Activated CD4-positive, alpha-beta T cell treated with anti-CD3 and anti-CD28 coated beads for 36 hours (primary cell): ENCODE measurements at regions of chr5 and their contacts with region 1.

Region 1: DNA sequence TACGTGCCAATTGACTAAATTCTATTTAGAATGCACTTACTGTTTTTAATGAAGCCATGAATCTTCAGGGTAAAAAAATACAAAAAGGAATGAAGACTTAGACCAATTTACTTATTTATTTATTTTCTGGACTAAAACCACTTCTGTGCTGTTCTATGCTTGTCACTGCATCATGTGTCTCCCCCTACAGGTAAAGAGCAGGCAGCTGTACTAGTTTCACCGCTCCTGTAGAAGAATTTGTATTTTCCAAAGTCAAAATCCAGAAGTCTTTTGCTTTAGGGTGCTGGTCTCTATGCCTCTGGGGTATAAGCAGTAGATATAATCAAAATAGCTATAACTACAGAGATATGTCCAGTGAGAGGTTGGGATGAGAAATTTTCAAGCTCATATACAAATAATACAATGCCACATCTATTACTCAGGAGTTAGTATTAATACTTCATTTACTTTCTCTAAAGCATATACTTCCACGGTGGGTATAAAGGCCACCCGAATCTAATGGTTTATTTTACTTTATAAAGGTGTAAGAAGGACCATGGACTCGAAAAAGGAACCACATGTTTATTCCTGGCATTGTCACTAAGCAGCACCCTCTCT is 591.5 kb downstream of the RAB3C start:
- DNase-seq: peak; percentile 47
- ATAC-seq: peak; percentile 72
- H3K4me3 Mint-ChIP-seq: no peak overlapping the region
- H3K27ac Mint-ChIP-seq: no peak overlapping the region
- H3K4me1 Mint-ChIP-seq: peaks cover 16% of the 10 kb centered on the region
- H3K27me3 Mint-ChIP-seq: no peaks in the 10 kb centered on the region

Region 2: GRCh38 chr5:58259685-58260152 is 914.6 kb before region 1 on chr5:
- CTCF ChIA-PET with region 1: no interaction called
- POLR2A ChIA-PET with region 1: no interaction called
- intact Hi-C with region 1: no loop called
- DNase-seq: no peak
- ATAC-seq: no peak
- H3K4me3 Mint-ChIP-seq: no peak overlapping the region
- H3K27ac Mint-ChIP-seq: no peak overlapping the region
- H3K4me1 Mint-ChIP-seq: no peaks in the 10 kb centered on the region
- H3K27me3 Mint-ChIP-seq: peaks cover 7% of the 10 kb centered on the region

Region 3: DNA sequence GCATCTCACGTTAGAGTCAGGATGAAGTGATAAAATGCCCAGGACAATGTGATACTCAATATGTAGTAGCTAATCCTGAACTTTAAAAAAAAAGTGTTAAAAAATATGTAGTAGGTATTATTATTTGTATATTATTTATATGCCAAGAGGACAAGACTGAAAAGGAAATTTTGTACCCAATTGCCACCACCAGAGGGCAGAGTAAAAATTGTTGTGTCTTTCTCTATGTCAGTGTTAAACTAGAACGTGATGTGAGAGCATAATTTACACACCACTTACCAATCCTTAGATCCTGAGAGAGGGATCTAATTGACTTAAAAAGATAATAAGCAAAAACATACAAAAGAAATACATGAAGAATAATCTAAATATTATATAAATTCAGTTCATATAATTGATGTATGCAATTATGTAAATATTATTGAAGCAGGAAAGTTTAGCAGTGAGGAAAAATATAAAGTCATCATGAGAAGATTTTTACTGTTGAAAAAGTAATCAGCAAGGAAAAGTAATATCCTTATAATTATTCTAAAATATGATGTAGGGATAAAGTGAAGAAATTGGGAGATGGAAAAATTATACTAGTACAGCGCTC is 302.6 kb before region 1 on chr5:
- CTCF ChIA-PET with region 1: interaction called, 9 read pairs
- POLR2A ChIA-PET with region 1: no interaction called
- intact Hi-C with region 1: loop called in 1 of 2 experiments (anchors 1 kb)
- DNase-seq: peak; percentile 44
- ATAC-seq: no peak
- H3K4me3 Mint-ChIP-seq: no peak overlapping the region
- H3K27ac Mint-ChIP-seq: no peak overlapping the region
- H3K4me1 Mint-ChIP-seq: no peaks in the 10 kb centered on the region
- H3K27me3 Mint-ChIP-seq: peaks cover 13% of the 10 kb centered on the region

Region 4: GRCh38 chr5:59020611-59021285 is 153.6 kb before region 1 on chr5:
- CTCF ChIA-PET with region 1: interaction called, 11 read pairs
- POLR2A ChIA-PET with region 1: no interaction called
- intact Hi-C with region 1: no loop called
- DNase-seq: peak; percentile 70
- ATAC-seq: peak; percentile 94
- H3K4me3 Mint-ChIP-seq: peak overlapping the region; percentile 47
- H3K27ac Mint-ChIP-seq: peak overlapping the region; percentile 94
- H3K4me1 Mint-ChIP-seq: peaks cover 65% of the 10 kb centered on the region
- H3K27me3 Mint-ChIP-seq: no peaks in the 10 kb centered on the region

Region 5: DNA sequence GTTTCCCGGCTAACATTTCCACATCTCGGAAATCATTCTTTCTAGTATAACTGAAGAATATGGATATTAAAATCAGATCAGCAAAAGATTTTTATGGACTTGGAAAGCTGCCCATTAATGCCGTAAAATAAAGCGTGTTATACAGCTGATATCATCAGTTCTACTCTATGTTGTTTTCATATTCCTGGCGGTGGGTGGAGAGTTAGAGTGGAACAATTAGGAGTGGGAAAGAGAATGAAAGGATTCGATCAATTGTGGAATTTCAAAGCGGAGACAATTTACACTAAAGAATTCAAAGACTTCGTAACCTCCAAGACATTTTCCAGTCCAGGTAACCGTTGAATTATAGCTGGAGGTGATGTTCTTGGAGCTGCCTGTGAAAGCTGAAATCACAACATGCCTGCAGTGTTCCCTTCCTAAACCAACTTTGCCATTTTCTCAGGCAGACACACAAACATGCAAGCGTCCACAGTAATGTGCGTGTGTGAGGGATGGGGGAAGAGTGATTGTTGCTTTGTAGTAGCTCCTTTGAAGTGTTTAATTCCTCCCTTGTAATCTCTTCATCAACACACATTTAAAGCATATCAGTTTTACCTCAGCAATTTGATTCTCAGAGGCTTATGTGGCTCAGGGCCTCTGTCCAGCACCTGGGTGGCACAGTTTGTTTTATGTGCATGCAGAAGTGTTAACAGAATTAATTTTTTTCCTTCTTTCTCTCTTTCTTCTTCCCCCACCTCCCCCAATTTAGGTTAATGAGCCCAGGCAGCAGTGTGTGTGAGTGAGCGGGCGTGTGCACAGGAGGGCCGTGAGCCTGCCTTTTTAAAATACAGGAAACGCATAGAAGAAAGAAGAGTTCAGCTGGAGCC is 47.4 kb before region 1 on chr5:
- CTCF ChIA-PET with region 1: interaction called, 18 read pairs
- POLR2A ChIA-PET with region 1: no interaction called
- intact Hi-C with region 1: loop called (anchors 2 to 5 kb)
- DNase-seq: no peak
- ATAC-seq: peak; percentile 7
- H3K4me3 Mint-ChIP-seq: no peak overlapping the region
- H3K27ac Mint-ChIP-seq: no peak overlapping the region
- H3K4me1 Mint-ChIP-seq: peaks cover 23% of the 10 kb centered on the region
- H3K27me3 Mint-ChIP-seq: no peaks in the 10 kb centered on the region

Region 6: DNA sequence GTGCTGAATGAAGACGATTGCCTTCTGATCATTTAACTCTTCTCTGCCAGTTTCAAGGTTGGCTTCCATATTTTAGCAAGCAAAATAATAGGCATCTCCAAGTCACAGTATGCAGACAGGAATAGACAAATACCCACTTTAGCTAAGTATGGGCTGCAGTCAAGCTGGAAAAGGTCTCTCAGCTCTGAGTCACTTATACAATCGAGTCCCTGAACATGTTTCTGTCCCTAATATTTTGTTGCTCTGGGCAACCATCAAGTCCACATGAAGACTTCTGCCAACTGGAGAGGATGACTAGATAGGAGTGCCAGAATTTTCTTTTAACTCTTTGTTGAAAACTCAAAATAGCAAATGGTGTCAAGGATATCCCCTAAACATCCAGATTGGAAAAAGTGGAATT is 16.2 kb before region 1 on chr5:
- CTCF ChIA-PET with region 1: interaction called, 29 read pairs
- POLR2A ChIA-PET with region 1: no interaction called
- intact Hi-C with region 1: no loop called
- DNase-seq: no peak
- ATAC-seq: no peak
- H3K4me3 Mint-ChIP-seq: no peak overlapping the region
- H3K27ac Mint-ChIP-seq: no peak overlapping the region
- H3K4me1 Mint-ChIP-seq: peaks cover 15% of the 10 kb centered on the region
- H3K27me3 Mint-ChIP-seq: no peaks in the 10 kb centered on the region